Activated CD4-positive, alpha-beta T cell treated with anti-CD3 and anti-CD28 coated beads, Interleukin-2, amount 10 ng/mL, durations not matched to agents 7 days and 5 days (primary cell): ENCODE measurements at regions of chr2 and their contacts with region 1.

Region 1: DNA sequence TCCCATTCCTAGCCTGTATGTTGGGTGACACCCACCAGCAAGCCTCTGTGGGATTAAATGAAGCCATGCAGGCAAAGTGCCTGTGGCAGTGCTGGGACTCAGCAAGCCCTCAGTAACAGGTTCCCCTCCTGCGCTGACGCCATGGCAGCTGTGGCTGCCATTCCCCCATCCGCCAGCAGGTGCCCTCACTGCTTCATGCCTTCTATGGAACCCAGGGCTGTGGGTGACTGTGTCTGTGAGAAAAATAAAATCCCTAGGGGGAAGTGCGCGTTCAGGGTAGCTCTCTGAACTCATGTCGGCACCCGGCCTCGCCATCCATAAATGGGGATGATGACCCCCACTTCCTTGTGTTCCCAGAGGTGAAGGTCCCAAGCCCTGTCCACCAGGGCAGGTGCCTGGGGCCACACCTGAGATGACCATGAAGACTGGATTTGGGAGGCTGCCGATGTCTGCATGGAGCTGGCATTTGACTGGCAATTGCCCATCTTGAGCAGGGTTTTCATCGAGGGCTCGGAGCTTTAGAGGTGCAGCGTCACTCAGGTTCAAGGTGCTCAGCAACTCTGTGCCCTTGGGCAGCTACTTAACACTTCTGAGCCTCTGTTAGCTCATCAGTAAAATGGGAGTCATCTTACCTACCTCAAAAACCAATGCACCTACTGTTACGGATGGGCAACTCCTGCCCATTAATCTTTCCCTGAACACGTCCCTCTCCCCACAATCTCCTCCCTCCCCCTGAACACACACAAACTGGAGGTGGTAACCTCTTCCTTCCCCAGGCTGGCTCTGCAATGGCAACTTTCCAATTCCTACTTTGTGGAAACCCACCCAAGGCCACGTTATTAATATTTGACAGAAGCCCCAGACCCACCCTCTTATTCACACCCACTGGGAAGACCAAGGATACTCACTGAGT is 2.9 kb upstream of the MAL start:
- DNase-seq: peak; percentile 88
- H3K4me3 Mint-ChIP-seq: peak overlapping the region; percentile 80
- H3K27ac Mint-ChIP-seq: peak overlapping the region; percentile 79
- H3K4me1 Mint-ChIP-seq: peaks cover 47% of the 10 kb centered on the region
- H3K27me3 Mint-ChIP-seq: no peaks in the 10 kb centered on the region

Region 2: DNA sequence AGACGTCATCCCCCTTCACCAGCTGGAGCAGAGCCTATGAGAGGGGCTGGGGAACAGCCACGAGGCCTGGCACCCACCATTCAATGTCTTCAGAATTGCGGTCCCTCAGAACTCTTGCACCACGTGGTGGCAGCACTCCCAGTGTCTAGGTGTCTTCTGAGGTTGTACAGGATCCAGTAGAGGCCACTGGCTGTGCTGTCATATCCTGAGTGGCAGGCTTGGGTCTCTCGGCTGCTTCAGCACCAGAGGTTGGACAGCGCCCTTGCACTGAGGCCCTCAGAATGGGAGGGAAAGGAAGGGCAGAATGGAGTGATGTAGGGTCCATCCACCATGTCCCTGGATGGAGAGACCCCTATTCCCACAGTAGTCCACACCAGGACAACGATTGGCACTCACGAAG is 263.4 kb before region 1 on chr2:
- CTCF ChIA-PET with region 1: no interaction called
- POLR2A ChIA-PET with region 1: no interaction called
- DNase-seq: peak; percentile 20
- H3K4me3 Mint-ChIP-seq: no peak overlapping the region
- H3K27ac Mint-ChIP-seq: no peak overlapping the region
- H3K4me1 Mint-ChIP-seq: no peaks in the 10 kb centered on the region
- H3K27me3 Mint-ChIP-seq: no peaks in the 10 kb centered on the region

Region 3: DNA sequence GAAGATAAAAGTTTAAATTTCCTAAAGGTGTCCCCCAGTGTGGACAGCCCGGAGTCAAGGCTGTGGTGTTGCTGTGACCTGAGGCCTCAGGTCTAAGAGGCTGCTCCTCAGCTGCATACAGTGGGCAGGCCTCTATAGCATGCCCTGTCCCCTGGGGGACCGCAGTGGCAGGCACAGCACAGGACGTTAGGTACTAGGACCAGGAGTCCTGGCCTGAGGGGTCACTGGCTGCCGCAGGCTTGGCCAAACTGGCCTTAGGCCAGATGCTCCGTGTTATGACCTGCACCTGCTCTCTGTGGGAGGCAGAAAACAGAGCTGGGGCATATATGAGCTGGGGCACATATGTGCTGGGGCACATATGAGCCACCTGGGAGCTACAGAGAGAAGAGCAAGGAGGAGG is 18.3 kb before region 1 on chr2:
- CTCF ChIA-PET with region 1: no interaction called
- POLR2A ChIA-PET with region 1: no interaction called
- DNase-seq: no peak
- H3K4me3 Mint-ChIP-seq: no peak overlapping the region
- H3K27ac Mint-ChIP-seq: no peak overlapping the region
- H3K4me1 Mint-ChIP-seq: peaks cover 2% of the 10 kb centered on the region
- H3K27me3 Mint-ChIP-seq: peaks cover 2% of the 10 kb centered on the region

Region 4: DNA sequence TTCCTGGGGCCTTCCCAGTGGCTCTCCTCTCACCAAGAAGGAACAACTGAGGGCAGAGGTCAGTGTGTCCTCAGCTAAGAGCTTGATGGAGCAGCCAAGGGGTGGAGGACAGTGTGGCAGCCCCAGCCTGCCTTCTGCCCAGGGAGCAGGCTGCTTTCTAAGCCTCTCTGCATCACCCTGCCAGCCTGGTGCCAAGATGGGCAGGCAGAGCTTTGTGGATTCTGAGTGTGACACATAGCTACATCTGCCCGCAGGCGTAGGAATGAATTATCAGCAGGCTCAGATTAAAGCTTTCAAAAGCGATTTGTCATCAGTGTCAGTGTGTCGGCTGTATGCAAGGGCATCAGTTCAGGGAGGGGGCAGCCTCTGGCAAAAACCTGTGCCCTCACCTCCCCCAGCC is 11.7 kb after region 1 on chr2:
- CTCF ChIA-PET with region 1: interaction called, 17 read pairs
- POLR2A ChIA-PET with region 1: no interaction called
- DNase-seq: no peak
- H3K4me3 Mint-ChIP-seq: no peak overlapping the region
- H3K27ac Mint-ChIP-seq: peak overlapping the region; percentile 43
- H3K4me1 Mint-ChIP-seq: peaks cover 75% of the 10 kb centered on the region
- H3K27me3 Mint-ChIP-seq: no peaks in the 10 kb centered on the region

Region 5: GRCh38 chr2:95043300-95044093 is 20.9 kb after region 1 on chr2:
- CTCF ChIA-PET with region 1: interaction called, 11 read pairs
- POLR2A ChIA-PET with region 1: no interaction called
- DNase-seq: no peak
- H3K4me3 Mint-ChIP-seq: no peak overlapping the region
- H3K27ac Mint-ChIP-seq: peak overlapping the region; percentile 38
- H3K4me1 Mint-ChIP-seq: peaks cover 70% of the 10 kb centered on the region
- H3K27me3 Mint-ChIP-seq: no peaks in the 10 kb centered on the region

Region 6: DNA sequence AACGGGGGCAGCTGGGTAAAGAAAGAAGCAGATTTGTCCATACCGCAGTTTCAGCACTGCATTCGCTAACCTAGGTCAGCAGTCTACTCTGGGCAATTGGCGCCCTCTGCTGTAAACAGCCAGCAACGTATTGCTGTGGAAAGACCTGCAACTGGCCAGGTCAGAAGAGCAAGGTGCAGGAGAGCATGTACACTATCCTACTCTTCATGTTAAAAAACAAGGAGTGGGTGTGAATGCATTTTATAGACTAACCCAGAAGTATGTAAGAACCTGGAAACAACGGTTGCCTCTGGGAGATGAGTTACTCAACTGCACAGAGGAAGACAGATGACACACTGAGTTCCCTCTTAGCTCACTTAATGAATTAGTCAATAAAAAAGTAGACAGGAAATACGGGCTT is 92.9 kb after region 1 on chr2:
- CTCF ChIA-PET with region 1: interaction called, 50 read pairs
- POLR2A ChIA-PET with region 1: interaction called, 3 read pairs
- DNase-seq: peak; percentile 86
- H3K4me3 Mint-ChIP-seq: no peak overlapping the region
- H3K27ac Mint-ChIP-seq: no peak overlapping the region
- H3K4me1 Mint-ChIP-seq: peaks cover 45% of the 10 kb centered on the region
- H3K27me3 Mint-ChIP-seq: no peaks in the 10 kb centered on the region

Region 7: GRCh38 chr2:95121407-95122196 is 99.0 kb after region 1 on chr2 and contains the start of gene MRPS5:
- CTCF ChIA-PET with region 1: interaction called, 50 read pairs
- POLR2A ChIA-PET with region 1: no interaction called
- DNase-seq: peak; percentile 85
- H3K4me3 Mint-ChIP-seq: peak within 1 kb of the TSS; percentile 87
- H3K27ac Mint-ChIP-seq: peak within 1 kb of the TSS; percentile 96
- H3K4me1 Mint-ChIP-seq: peaks cover 40% of the 10 kb centered on the region
- H3K27me3 Mint-ChIP-seq: no peaks in the 10 kb centered on the region
- total RNA-seq, gene MRPS5: 70.3 to 71.7 TPM